Left ventricle myocardium inferior (tissue), 1 donor: ENCODE measurements at regions of chr3 and their contacts with region 1.

Region 1: GRCh38 chr3:43503067-43503728 is 118.6 kb downstream of the ANO10 start:
- DNase-seq: no peak
- H3K4me3 ChIP-seq: no peak overlapping the region
- H3K27ac ChIP-seq: no peak overlapping the region
- H3K4me1 ChIP-seq: peaks cover 19% of the 10 kb centered on the region
- H3K27me3 ChIP-seq: no peaks in the 10 kb centered on the region
- CTCF ChIP-seq: peak; percentile 69

Region 2: GRCh38 chr3:43296565-43296964 is 206.6 kb before region 1 on chr3:
- intact Hi-C with region 1: loop called (anchors 10 kb)
- DNase-seq: no peak
- H3K4me3 ChIP-seq: peak overlapping the region; percentile 23
- H3K27ac ChIP-seq: peak overlapping the region; percentile 16
- H3K4me1 ChIP-seq: peaks cover 100% of the 10 kb centered on the region
- H3K27me3 ChIP-seq: no peaks in the 10 kb centered on the region
- CTCF ChIP-seq: no peak

Region 3: GRCh38 chr3:43699864-43700263 is 196.7 kb after region 1 on chr3:
- intact Hi-C with region 1: no loop called
- DNase-seq: no peak
- H3K4me3 ChIP-seq: no peak overlapping the region
- H3K27ac ChIP-seq: no peak overlapping the region
- H3K4me1 ChIP-seq: peaks cover 30% of the 10 kb centered on the region
- H3K27me3 ChIP-seq: no peaks in the 10 kb centered on the region
- CTCF ChIP-seq: no peak

Region 4: GRCh38 chr3:43723121-43723734 is 220.0 kb after region 1 on chr3:
- intact Hi-C with region 1: no loop called
- DNase-seq: no peak
- H3K4me3 ChIP-seq: no peak overlapping the region
- H3K27ac ChIP-seq: no peak overlapping the region
- H3K4me1 ChIP-seq: no peaks in the 10 kb centered on the region
- H3K27me3 ChIP-seq: no peaks in the 10 kb centered on the region
- CTCF ChIP-seq: no peak